ENCODE measurements at regions of chr3 and their contacts with region 1.

Region 1: DNA sequence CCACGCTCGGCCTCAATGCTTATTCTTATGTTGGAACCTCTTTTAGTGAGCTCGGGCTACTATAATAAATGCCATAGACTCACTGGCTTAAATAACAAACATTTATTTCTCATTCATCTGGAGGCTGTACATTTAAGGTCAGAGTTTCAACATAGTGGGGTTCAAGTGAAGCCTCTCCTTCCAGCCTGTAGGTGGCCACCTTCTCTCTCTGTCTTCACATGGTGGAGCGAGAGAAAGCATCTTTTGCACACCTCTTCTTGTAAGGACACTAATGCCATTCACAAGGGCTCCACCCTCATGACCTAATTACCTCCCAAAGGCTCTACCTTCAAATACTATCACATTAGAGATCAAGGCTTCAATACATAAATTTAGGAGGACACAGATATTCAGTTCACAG is 520.3 kb upstream of the EPHA6 start:
- DNase-seq: no peak
- H3K4me3 ChIP-seq: no peak overlapping the region
- H3K27ac ChIP-seq: no peak overlapping the region
- H3K4me1 ChIP-seq: no peaks in the 10 kb centered on the region
- H3K27me3 ChIP-seq: no peaks in the 10 kb centered on the region
- CTCF ChIP-seq: no peak
- POLR2A ChIP-seq: no peak

Region 2: DNA sequence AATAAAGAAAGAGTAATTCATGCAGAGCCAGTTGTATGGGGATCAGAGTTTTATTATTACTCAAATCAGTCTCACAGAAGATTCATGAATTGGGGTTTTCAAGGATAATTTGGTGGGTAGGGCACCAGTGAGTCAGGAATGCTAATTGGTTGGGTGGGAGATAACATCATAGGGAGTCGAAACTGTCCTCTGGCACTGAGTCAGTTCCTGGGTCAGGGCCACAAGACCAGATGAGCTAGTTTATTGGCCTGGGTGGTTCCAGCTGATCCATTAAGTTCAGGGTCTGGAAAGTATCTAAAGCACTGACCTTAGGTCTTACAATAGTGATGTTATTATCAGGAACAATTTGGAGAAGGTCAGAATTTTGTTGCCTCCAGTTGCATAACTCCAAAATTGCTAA is 478.3 kb before region 1 on chr3:
- intact Hi-C with region 1: no loop called
- DNase-seq: no peak
- H3K4me3 ChIP-seq: no peak overlapping the region
- H3K27ac ChIP-seq: no peak overlapping the region
- H3K4me1 ChIP-seq: no peaks in the 10 kb centered on the region
- H3K27me3 ChIP-seq: no peaks in the 10 kb centered on the region
- CTCF ChIP-seq: no peak
- POLR2A ChIP-seq: no peak

Region 3: GRCh38 chr3:96319171-96319570 is 25.0 kb after region 1 on chr3:
- intact Hi-C with region 1: loop called (anchors 2 kb)
- DNase-seq: no peak
- H3K4me3 ChIP-seq: no peak overlapping the region
- H3K27ac ChIP-seq: no peak overlapping the region
- H3K4me1 ChIP-seq: no peaks in the 10 kb centered on the region
- H3K27me3 ChIP-seq: no peaks in the 10 kb centered on the region
- CTCF ChIP-seq: no peak
- POLR2A ChIP-seq: no peak

Region 4: GRCh38 chr3:97037277-97037913 is 743.3 kb after region 1 on chr3:
- intact Hi-C with region 1: no loop called
- DNase-seq: no peak
- H3K4me3 ChIP-seq: no peak overlapping the region
- H3K27ac ChIP-seq: no peak overlapping the region
- H3K4me1 ChIP-seq: no peaks in the 10 kb centered on the region
- H3K27me3 ChIP-seq: no peaks in the 10 kb centered on the region
- CTCF ChIP-seq: no peak
- POLR2A ChIP-seq: no peak

Region 5: DNA sequence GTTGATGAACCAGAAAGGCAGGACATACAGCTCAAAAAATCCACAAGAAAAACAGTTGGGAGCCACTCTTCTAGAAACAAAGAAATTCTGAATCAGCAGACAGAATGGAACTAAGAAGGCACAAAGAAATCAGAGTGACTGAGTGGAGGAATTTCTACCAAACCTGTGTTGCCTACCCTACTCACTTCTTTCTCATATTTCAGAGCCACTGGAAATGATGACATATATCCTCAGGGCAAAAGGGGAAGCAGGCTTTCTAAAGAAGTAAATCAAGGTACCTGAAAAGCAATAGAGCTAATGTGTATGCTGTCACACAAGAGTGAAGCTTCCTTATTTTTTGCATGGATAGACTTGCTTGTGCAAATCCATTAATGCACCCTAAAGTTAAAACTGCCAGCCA is 1265.2 kb after region 1 on chr3:
- intact Hi-C with region 1: loop called (anchors 5 kb)
- DNase-seq: no peak
- H3K4me3 ChIP-seq: no peak overlapping the region
- H3K27ac ChIP-seq: no peak overlapping the region
- H3K4me1 ChIP-seq: no peaks in the 10 kb centered on the region
- H3K27me3 ChIP-seq: no peaks in the 10 kb centered on the region
- CTCF ChIP-seq: no peak
- POLR2A ChIP-seq: no peak

Measured in breast epithelium (tissue), 4 donors.